ENCODE measurements at regions of chr7 and their contacts with region 1.

Region 1: GRCh38 chr7:130912862-130913631 is 179.0 kb upstream of the KLF14 start:
- DNase-seq: peak; percentile 94
- H3K4me3 Mint-ChIP-seq: peak overlapping the region; percentile 77
- H3K27ac Mint-ChIP-seq: peak overlapping the region; percentile 91
- H3K4me1 Mint-ChIP-seq: peaks cover 81% of the 10 kb centered on the region
- H3K27me3 Mint-ChIP-seq: no peaks in the 10 kb centered on the region

Region 2: DNA sequence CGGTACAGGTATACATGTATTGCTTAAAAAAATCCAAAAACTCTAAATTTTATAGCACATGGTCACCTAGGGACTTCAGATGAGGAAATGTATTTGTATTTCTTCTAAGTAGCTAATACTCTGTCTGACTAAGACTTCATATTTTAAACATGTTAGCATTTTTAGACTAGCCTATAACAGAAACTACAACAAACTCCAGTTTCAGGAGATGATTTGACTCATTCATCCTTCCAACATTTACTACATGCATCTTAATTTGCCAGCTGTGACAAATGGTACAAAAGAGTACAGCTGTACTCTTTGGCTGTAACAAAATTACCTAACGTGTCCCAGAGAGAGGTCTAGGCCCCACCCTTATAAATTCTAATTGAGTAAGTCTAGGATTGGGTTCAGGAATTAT is 730.1 kb before region 1 on chr7:
- intact Hi-C with region 1: loop called (anchors 1 kb)
- DNase-seq: no peak
- H3K4me3 Mint-ChIP-seq: no peak overlapping the region
- H3K27ac Mint-ChIP-seq: peak overlapping the region; percentile 78
- H3K4me1 Mint-ChIP-seq: peaks cover 20% of the 10 kb centered on the region
- H3K27me3 Mint-ChIP-seq: no peaks in the 10 kb centered on the region

Region 3: DNA sequence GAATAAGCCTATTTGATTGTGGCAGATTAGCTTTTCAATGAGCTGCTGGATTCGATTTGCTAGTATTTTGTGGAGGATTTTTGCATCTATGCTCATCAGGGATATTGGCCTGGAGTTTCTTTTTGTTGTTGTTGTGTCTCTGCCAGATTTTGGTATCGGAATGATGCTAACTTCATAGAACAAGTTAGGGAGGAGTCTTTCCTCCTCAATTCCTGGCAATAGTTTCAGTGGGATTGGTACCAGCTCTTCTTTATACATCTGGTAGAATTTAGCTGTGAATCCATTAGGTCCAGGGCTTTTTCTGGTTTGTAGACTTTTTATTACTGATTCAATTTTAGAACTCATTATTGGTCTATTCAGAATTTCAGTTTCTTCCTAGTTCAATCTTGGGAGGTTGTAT is 135.6 kb before region 1 on chr7:
- intact Hi-C with region 1: no loop called
- DNase-seq: no peak
- H3K4me3 Mint-ChIP-seq: no peak overlapping the region
- H3K27ac Mint-ChIP-seq: no peak overlapping the region
- H3K4me1 Mint-ChIP-seq: no peaks in the 10 kb centered on the region
- H3K27me3 Mint-ChIP-seq: peaks cover 39% of the 10 kb centered on the region

Region 4: GRCh38 chr7:130896898-130897514 is 16.0 kb before region 1 on chr7:
- intact Hi-C with region 1: loop called (anchors 1 kb)
- DNase-seq: peak; percentile 91
- H3K4me3 Mint-ChIP-seq: peak overlapping the region; percentile 48
- H3K27ac Mint-ChIP-seq: peak overlapping the region; percentile 95
- H3K4me1 Mint-ChIP-seq: peaks cover 82% of the 10 kb centered on the region
- H3K27me3 Mint-ChIP-seq: no peaks in the 10 kb centered on the region

Region 5: GRCh38 chr7:130931423-130931822 is 18.4 kb after region 1 on chr7:
- intact Hi-C with region 1: no loop called
- DNase-seq: no peak
- H3K4me3 Mint-ChIP-seq: no peak overlapping the region
- H3K27ac Mint-ChIP-seq: peak overlapping the region; percentile 39
- H3K4me1 Mint-ChIP-seq: peaks cover 75% of the 10 kb centered on the region
- H3K27me3 Mint-ChIP-seq: no peaks in the 10 kb centered on the region

Region 6: DNA sequence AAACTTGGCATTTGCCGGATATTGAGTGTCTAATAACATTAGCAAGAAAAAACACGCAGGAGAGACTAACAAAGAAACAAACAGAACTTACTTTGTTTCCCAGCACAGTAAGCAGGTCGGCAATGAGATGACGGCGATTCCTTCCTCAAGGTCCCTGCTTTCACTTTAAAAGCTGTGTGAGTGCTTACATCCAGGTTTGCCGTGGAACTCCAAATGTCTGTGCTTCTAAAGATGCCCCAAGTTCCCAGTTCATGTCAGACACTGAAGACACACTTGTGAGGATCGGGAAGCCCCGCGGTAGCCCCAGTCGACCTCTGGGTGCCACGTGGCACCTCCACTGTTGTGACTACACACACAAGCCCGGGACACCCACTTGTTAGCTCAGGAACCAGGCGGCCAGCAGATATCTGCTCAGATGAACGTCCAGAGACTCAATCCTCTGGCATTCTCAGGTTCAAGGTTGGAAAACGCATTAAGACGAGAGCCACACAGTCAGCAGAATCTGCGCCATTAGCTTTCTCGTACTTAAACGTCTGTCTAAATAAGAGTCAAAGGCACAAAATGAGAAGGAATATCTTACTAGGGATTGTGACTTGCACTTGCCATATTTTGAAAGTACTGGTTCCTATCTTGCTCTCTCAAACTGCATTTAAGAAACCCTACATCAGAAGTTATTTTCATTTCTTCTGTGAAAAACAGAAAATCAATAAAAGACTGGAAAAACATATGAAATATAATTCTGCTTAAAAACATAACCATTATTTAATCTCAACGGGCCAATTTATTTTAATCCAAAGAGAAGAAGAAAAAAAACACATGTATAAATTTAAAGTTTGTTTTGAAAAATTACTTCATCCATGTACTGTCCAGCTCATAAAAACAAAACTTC is 28.5 kb after region 1 on chr7:
- intact Hi-C with region 1: loop called (anchors 1 kb)
- DNase-seq: peak; percentile 69
- H3K4me3 Mint-ChIP-seq: peak overlapping the region; percentile 86
- H3K27ac Mint-ChIP-seq: peak overlapping the region; percentile 90
- H3K4me1 Mint-ChIP-seq: peaks cover 80% of the 10 kb centered on the region
- H3K27me3 Mint-ChIP-seq: no peaks in the 10 kb centered on the region

Region 7: GRCh38 chr7:130970696-130971095 is 57.6 kb after region 1 on chr7:
- intact Hi-C with region 1: loop called (anchors 1 kb)
- DNase-seq: no peak
- H3K4me3 Mint-ChIP-seq: peak overlapping the region; percentile 64
- H3K27ac Mint-ChIP-seq: peak overlapping the region; percentile 96
- H3K4me1 Mint-ChIP-seq: peaks cover 57% of the 10 kb centered on the region
- H3K27me3 Mint-ChIP-seq: no peaks in the 10 kb centered on the region

Region 8: GRCh38 chr7:131027287-131027773 is 114.3 kb after region 1 on chr7:
- intact Hi-C with region 1: loop called (anchors 1 kb)
- DNase-seq: peak; percentile 76
- H3K4me3 Mint-ChIP-seq: peak overlapping the region; percentile 40
- H3K27ac Mint-ChIP-seq: peak overlapping the region; percentile 83
- H3K4me1 Mint-ChIP-seq: peaks cover 56% of the 10 kb centered on the region
- H3K27me3 Mint-ChIP-seq: no peaks in the 10 kb centered on the region

Region 9: DNA sequence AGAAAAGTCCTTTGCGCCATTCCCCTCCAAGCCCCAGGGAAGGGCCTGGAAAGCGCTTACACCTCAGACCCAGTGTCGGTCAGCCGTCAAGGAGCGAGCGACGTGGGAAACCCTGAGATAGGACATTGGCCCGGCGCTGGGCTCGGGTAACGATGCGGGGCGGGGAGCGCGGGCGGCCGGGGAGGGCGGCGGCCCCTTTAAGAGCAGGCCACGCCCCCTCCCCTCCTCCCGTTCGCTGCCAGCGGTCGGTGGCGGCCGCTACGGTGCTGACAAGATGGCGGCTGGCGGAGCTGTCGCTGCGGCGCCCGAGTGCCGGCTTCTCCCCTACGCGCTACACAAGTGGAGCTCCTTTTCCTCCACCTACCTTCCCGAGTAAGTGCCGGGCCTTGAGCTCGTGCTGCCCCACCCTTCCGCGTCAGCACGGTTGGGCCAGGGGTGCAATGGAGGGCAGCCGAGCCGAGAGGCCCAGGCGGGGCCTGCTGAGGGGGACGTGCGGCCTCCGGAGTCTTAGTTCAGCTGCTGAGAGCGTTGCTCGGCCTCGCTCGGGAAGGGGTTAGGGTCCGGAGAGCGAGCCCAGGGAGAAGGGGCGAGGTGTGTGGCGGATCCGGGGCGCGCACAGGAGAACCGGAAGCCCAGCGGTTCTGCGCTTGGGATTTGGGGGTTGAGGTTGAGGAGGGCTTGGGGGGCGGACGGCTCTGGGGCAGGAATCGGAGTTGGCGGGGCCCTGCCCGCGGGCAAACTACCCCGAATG is 414.8 kb after region 1 on chr7 and contains the start of gene MKLN1:
- intact Hi-C with region 1: loop called (anchors 2 kb)
- DNase-seq: peak; percentile 97
- H3K4me3 Mint-ChIP-seq: peak within 1 kb of the TSS; percentile 99
- H3K27ac Mint-ChIP-seq: peak within 1 kb of the TSS; percentile 97
- H3K4me1 Mint-ChIP-seq: peaks cover 45% of the 10 kb centered on the region
- H3K27me3 Mint-ChIP-seq: no peaks in the 10 kb centered on the region
- total RNA-seq, gene MKLN1: 38.3 and 38.8 TPM in 2 replicates